ENCODE measurements at regions of chr7 and their contacts with region 1.

Region 1: GRCh38 chr7:44240983-44241510 is 40.3 kb downstream of the YKT6 start:
- DNase-seq: peak; percentile 80 to 82
- H3K4me3 ChIP-seq: no peak overlapping the region
- H3K4me3 Mint-ChIP-seq: no peak overlapping the region
- H3K27ac Mint-ChIP-seq: no peak overlapping the region
- H3K4me1 ChIP-seq: no peaks in the 10 kb centered on the region
- H3K4me1 Mint-ChIP-seq: no peaks in the 10 kb centered on the region
- H3K27me3 ChIP-seq: no peaks in the 10 kb centered on the region
- H3K27me3 Mint-ChIP-seq: peaks cover 7% of the 10 kb centered on the region
- CTCF ChIP-seq: peak; percentile 63 to 88

Region 2: DNA sequence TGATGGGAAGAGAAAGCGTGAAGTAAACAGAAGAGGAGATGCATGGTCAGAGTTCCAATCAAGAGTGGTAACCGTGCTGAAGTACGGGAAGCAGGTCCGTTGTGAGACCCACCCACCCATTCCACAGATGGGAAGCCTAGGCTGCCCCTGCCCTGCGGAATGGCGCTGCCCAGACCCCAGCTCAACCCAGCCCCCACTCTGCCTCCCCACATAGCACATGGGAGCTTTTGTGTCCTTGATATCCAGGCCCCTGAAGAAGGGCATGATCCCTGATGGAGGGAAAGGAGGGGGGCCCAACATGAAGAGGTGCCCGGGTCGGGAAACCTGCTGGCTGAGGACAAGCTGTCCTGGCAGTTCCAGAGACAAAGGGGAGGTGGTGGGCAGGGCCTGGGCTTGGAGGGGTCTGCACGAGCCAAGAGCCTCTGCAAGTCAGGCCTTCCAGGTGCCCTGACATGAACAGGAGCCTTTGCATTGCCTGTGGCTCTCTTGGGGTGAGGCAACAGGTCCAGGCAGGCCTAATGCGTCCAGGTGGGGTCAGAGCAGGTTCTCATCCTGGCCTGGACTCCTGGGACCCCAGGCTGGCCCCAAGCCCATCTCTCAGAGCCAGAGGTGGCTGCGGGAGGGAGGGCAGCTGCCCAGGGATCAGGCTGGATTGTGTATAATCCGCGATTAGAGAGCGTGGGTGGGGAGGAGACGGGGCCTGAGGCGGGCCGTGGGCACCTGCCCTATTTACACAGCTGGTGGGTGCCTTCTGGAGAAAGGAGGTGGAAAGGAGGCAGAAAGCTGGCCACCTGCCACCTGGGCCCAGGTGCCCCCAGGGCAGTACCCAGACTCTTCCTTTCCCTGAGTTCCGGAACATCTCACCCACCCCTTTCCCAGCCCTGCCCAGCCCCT is 16.7 kb before region 1 on chr7:
- CTCF ChIA-PET with region 1: interaction called, 11 read pairs
- POLR2A ChIA-PET with region 1: no interaction called
- intact Hi-C with region 1: no loop called
- DNase-seq: no peak
- H3K4me3 ChIP-seq: no peak overlapping the region
- H3K4me3 Mint-ChIP-seq: no peak overlapping the region
- H3K27ac Mint-ChIP-seq: no peak overlapping the region
- H3K4me1 ChIP-seq: no peaks in the 10 kb centered on the region
- H3K4me1 Mint-ChIP-seq: no peaks in the 10 kb centered on the region
- H3K27me3 ChIP-seq: no peaks in the 10 kb centered on the region
- H3K27me3 Mint-ChIP-seq: peaks cover 16% of the 10 kb centered on the region
- CTCF ChIP-seq: no peak

Region 3: GRCh38 chr7:44280132-44280531 is 39.1 kb after region 1 on chr7:
- CTCF ChIA-PET with region 1: no interaction called
- POLR2A ChIA-PET with region 1: no interaction called
- intact Hi-C with region 1: no loop called
- DNase-seq: peak in 1 of 2 experiments; percentile 21
- H3K4me3 ChIP-seq: no peak overlapping the region
- H3K4me3 Mint-ChIP-seq: no peak overlapping the region
- H3K27ac Mint-ChIP-seq: no peak overlapping the region
- H3K4me1 ChIP-seq: no peaks in the 10 kb centered on the region
- H3K4me1 Mint-ChIP-seq: no peaks in the 10 kb centered on the region
- H3K27me3 ChIP-seq: no peaks in the 10 kb centered on the region
- H3K27me3 Mint-ChIP-seq: no peaks in the 10 kb centered on the region
- CTCF ChIP-seq: no peak

Region 4: GRCh38 chr7:44307301-44307900 is 66.4 kb after region 1 on chr7:
- CTCF ChIA-PET with region 1: no interaction called
- POLR2A ChIA-PET with region 1: no interaction called
- intact Hi-C with region 1: loop called (anchors 1 kb)
- DNase-seq: peak in 1 of 2 experiments; percentile 38
- H3K4me3 ChIP-seq: no peak overlapping the region
- H3K4me3 Mint-ChIP-seq: no peak overlapping the region
- H3K27ac Mint-ChIP-seq: no peak overlapping the region
- H3K4me1 ChIP-seq: no peaks in the 10 kb centered on the region
- H3K4me1 Mint-ChIP-seq: no peaks in the 10 kb centered on the region
- H3K27me3 ChIP-seq: no peaks in the 10 kb centered on the region
- H3K27me3 Mint-ChIP-seq: peaks cover 4% of the 10 kb centered on the region
- CTCF ChIP-seq: peak in 1 of 2 experiments; percentile 27

Region 5: DNA sequence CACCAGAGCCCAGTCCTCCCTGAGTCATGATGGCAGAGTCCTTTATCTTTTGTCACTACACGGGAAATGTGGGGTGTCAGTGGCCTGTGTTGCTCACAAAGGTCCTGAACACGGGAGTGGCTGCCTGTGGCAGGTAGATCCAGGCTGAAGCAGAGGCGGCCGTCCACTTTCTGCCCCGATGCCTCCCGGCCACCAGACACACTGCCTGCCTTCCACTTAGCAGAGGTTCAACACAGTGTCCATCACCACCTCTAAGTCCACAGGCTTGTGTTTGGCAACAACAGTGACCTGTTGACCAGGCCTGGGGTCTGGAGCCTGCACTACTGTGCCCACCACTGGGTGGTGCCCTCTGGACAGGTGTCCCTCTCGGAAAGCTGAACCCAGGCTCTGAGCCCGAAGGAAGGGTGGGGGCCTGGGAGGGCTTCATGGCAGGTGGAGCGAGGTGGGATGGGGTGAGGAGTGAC is 134.2 kb after region 1 on chr7:
- CTCF ChIA-PET with region 1: no interaction called
- POLR2A ChIA-PET with region 1: no interaction called
- intact Hi-C with region 1: loop called (anchors 5 kb)
- DNase-seq: peak in 1 of 2 experiments; percentile 62
- H3K4me3 ChIP-seq: no peak overlapping the region
- H3K4me3 Mint-ChIP-seq: no peak overlapping the region
- H3K27ac Mint-ChIP-seq: no peak overlapping the region
- H3K4me1 ChIP-seq: no peaks in the 10 kb centered on the region
- H3K4me1 Mint-ChIP-seq: no peaks in the 10 kb centered on the region
- H3K27me3 ChIP-seq: no peaks in the 10 kb centered on the region
- H3K27me3 Mint-ChIP-seq: peaks cover 6% of the 10 kb centered on the region
- CTCF ChIP-seq: peak; percentile 27 to 60

Region 6: GRCh38 chr7:44477063-44477830 is 236.2 kb after region 1 on chr7:
- CTCF ChIA-PET with region 1: interaction called, 6 read pairs
- POLR2A ChIA-PET with region 1: no interaction called
- intact Hi-C with region 1: loop called (anchors 1 kb)
- DNase-seq: peak; percentile 68 to 77
- H3K4me3 ChIP-seq: no peak overlapping the region
- H3K4me3 Mint-ChIP-seq: no peak overlapping the region
- H3K27ac Mint-ChIP-seq: no peak overlapping the region
- H3K4me1 ChIP-seq: peaks cover 16% of the 10 kb centered on the region
- H3K4me1 Mint-ChIP-seq: peaks cover 38% of the 10 kb centered on the region
- H3K27me3 ChIP-seq: no peaks in the 10 kb centered on the region
- H3K27me3 Mint-ChIP-seq: no peaks in the 10 kb centered on the region
- CTCF ChIP-seq: peak; percentile 91 to 92

Measured in Caco-2 (cell line).